Activated CD4-positive, alpha-beta memory T cell treated with anti-CD3 and anti-CD28 coated beads, Interleukin-2, amount 10 ng/mL, durations not matched to agents 7 days and 5 days (primary cell): ENCODE measurements at regions of chr10 and their contacts with region 1.

Region 1: DNA sequence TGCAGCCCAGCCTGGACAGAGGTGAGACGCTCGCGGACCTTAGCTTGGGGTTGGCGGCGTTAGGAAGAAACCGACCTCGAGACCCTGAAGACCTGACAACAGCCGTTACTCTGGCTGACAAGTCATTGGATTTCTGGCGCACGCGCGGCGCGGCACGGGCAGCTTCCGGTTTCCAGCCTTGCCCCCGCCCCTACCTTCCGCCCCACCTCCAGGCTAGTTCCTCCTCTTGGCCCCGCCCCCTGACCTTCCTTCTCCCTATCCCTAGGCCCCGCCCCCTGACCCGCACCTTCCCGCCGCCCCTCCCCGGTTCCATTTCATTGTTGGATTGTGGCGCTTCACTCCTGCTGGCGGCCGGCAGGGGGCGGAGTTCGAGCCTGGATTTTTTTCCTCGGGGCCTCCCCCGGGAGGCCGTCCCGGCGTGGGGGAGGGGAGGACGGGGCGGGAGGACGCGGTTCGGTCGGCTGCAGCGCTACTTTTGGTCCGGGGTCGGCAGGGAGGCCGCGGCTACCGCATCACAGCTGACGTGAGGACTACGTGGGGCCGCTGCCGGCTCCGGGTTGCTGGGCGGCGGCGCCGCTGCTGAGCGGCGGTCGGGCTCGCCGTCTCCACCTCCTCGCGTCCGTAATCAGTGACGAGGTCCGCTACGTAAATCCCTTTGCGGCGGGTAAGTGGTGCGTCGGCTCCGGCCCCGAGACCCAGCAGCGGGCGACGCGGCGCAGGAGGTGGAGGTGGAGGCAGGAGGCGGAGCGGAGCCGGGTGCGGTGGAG is at the start of gene CREM:
- DNase-seq: peak; percentile 99
- H3K4me3 Mint-ChIP-seq: peak within 1 kb of the TSS; percentile 94
- H3K27ac Mint-ChIP-seq: peak within 1 kb of the TSS; percentile 95
- H3K4me1 Mint-ChIP-seq: peaks cover 61% of the 10 kb centered on the region
- H3K27me3 Mint-ChIP-seq: no peaks in the 10 kb centered on the region
- total RNA-seq, gene CREM: 154 to 157 TPM

Region 2: GRCh38 chr10:35090162-35090954 is 36.4 kb before region 1 on chr10 and contains the start of gene CUL2:
- CTCF ChIA-PET with region 1: interaction called, 3 read pairs
- POLR2A ChIA-PET with region 1: interaction called, 24 read pairs
- DNase-seq: peak; percentile 92
- H3K4me3 Mint-ChIP-seq: peak within 1 kb of the TSS; percentile 91
- H3K27ac Mint-ChIP-seq: peak within 1 kb of the TSS; percentile 96
- H3K4me1 Mint-ChIP-seq: peaks cover 40% of the 10 kb centered on the region
- H3K27me3 Mint-ChIP-seq: no peaks in the 10 kb centered on the region
- total RNA-seq, gene CUL2: 30.6 to 34.3 TPM

Region 3: DNA sequence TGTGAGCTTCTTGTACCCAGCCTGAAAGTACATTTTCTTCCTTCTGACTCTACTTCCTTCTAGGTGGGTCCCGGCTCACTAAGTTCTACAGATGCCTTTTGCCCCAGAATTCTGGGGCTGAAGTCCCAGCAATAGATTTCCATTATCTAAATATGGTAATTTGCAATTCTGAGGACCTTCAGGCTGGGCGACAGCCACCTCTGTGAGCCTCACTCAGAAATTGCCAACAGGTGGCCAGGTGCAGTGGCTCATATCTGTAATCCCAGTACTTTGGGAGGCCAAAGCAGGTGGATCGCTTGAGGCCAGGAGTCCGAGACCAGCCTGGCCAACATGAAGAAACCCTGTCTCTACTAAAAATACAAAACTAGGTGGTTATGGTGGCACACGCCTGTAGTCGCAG is 23.6 kb after region 1 on chr10:
- CTCF ChIA-PET with region 1: interaction called, 4 read pairs
- POLR2A ChIA-PET with region 1: interaction called, 64 read pairs
- DNase-seq: no peak
- H3K4me3 Mint-ChIP-seq: peak overlapping the region; percentile 33
- H3K27ac Mint-ChIP-seq: peak overlapping the region; percentile 73
- H3K4me1 Mint-ChIP-seq: peaks cover 57% of the 10 kb centered on the region
- H3K27me3 Mint-ChIP-seq: no peaks in the 10 kb centered on the region

Region 4: GRCh38 chr10:35208536-35208935 is 81.8 kb after region 1 on chr10:
- CTCF ChIA-PET with region 1: interaction called, 41 read pairs
- POLR2A ChIA-PET with region 1: interaction called, 730 read pairs
- DNase-seq: peak; percentile 79
- H3K4me3 Mint-ChIP-seq: peak overlapping the region; percentile 57
- H3K27ac Mint-ChIP-seq: peak overlapping the region; percentile 90
- H3K4me1 Mint-ChIP-seq: peaks cover 65% of the 10 kb centered on the region
- H3K27me3 Mint-ChIP-seq: no peaks in the 10 kb centered on the region

Region 5: DNA sequence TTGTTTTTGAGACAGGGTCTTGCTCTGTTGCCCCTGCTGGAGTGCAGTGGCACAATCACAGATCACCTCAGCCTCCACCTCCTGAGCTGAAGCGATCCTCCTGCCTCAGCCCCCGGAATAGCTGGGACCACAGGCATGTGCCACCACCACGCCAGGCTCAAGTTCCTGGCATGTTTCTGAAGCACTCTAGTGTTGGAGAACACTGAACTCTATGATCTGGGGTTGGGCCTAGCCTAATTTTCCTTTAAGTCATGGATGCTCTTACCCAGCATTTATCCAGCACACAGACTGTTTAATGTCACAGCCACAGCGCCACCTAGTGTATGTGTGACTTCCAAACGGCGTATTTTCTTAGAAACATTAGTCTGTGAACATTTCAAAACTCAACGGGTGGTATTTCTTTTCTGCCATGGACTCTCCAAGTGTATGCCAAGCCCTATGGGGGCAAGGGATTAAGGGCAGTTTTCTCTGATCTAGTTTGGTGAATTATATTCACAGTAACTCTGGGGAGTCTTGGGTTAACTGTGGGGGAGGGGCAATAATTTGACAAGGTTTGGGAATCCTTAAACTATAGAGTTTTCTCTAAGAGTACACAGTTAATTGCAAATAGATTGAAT is 91.7 kb after region 1 on chr10:
- CTCF ChIA-PET with region 1: interaction called, 216 read pairs
- POLR2A ChIA-PET with region 1: interaction called, 176 read pairs
- DNase-seq: peak; percentile 88
- H3K4me3 Mint-ChIP-seq: peak overlapping the region; percentile 51
- H3K27ac Mint-ChIP-seq: peak overlapping the region; percentile 76
- H3K4me1 Mint-ChIP-seq: peaks cover 55% of the 10 kb centered on the region
- H3K27me3 Mint-ChIP-seq: no peaks in the 10 kb centered on the region

Region 6: GRCh38 chr10:35225204-35225603 is 98.5 kb after region 1 on chr10:
- CTCF ChIA-PET with region 1: interaction called, 216 read pairs
- POLR2A ChIA-PET with region 1: interaction called, 176 read pairs
- DNase-seq: no peak
- H3K4me3 Mint-ChIP-seq: no peak overlapping the region
- H3K27ac Mint-ChIP-seq: peak overlapping the region; percentile 48
- H3K4me1 Mint-ChIP-seq: peaks cover 14% of the 10 kb centered on the region
- H3K27me3 Mint-ChIP-seq: no peaks in the 10 kb centered on the region